MCF 10A (cell line): ENCODE measurements at regions of chr9 and their contacts with region 1.

Region 1: DNA sequence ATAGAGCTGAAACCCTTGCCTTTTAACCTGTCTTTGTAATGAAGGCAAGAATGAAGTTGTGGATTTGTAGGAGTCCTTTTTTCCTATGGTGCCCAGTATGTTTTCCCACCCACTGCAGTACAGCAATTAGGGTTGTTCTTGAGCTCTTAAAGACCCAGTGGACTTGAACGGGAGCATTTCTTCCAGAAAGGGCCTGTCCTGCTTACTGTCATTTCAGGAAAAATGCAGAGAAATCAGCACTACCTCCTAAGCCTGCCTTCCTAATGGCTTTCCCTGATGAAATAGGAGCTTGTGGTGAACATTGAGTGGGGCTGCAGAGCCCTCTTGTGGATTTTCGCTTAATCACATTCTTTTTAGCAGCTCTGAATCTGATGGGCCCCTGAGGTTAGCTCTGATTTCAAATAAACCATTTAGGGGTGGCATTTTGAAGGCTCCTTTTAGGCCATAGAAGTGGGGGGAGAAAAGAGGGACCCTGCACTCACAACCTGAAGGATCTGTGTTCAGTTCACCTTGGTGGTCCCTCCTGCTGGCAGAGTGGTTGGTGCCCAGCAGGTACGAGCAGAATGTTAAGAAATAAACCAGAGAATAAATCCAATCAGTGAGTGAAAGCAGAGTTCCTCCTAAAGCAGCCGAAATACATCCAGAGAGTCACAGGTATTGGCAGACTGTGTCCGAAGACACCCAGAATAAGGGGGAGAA is 188.0 kb upstream of the KLF9 start:
- DNase-seq: peak; percentile 83
- H3K4me3 Mint-ChIP-seq: no peak overlapping the region
- H3K27ac Mint-ChIP-seq: no peak overlapping the region
- H3K4me1 Mint-ChIP-seq: peaks cover 12% of the 10 kb centered on the region
- H3K27me3 Mint-ChIP-seq: no peaks in the 10 kb centered on the region
- CTCF ChIP-seq: peak; percentile 77

Region 2: DNA sequence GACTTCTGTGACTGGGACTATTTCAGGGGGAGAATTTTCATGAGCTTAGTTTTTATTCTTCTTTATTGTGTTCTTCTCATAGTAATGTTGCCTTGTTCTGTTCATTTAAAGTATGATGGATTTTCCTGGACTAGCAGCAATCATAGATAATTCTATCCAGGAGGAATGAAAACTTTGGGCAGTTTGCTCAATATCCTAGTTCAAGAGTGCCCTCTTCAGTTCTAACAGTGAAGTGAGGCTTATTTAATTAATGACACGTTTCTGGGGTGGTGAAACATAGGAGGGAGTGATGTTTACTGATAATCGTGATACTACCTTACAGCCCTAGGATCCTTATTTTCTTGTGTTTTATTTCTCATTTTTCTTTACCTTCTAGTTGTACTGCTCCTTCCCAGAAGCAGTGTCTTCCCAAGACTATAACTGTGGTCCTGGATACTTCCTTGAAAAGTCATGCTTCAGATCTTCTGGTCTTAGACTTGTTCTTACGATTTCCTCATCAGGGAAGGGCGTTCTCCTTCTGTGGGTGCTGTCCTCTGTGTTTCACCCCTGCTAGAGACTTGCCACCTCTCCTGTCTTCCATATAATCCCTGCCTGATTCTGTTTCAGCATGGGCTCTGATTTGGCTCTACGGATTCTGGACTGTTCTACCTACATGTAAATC is 724.5 kb before region 1 on chr9:
- CTCF ChIA-PET with region 1: no interaction called
- POLR2A ChIA-PET with region 1: no interaction called
- intact Hi-C with region 1: loop called (anchors 2 kb)
- DNase-seq: peak; percentile 63
- H3K4me3 Mint-ChIP-seq: no peak overlapping the region
- H3K27ac Mint-ChIP-seq: no peak overlapping the region
- H3K4me1 Mint-ChIP-seq: peaks cover 8% of the 10 kb centered on the region
- H3K27me3 Mint-ChIP-seq: no peaks in the 10 kb centered on the region
- CTCF ChIP-seq: peak; percentile 58

Region 3: DNA sequence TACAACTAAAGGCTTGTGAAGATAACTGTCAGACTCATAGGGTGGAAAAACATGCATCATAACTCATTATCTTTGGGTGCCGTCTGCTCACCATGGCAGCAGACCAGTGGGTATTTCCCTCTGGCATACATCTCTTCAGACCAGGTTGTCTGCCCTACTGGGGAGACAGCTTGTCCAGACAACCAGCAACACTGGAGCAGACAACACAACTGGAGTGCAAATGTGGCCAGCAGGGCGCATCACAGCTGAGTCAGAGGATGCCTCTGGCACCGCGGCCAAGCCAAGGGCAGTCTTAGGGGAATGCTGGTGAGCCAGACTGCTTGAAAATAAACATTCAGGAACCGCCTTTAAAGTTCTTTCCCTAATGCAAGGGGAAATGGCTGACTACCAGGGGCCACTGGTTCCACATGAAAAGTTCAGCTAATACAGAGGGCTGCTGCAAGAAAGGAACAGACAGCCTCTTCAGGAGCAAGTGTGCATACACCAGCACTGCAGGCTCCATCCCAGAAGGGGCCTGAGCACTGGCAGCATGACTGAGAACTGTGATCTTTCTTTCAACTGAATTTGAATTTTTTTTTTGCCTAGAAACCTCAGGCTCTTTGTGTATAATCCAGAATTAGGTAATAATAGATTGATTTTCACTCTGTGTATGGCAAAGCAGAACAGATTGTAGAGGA is 481.5 kb before region 1 on chr9:
- CTCF ChIA-PET with region 1: interaction called, 8 read pairs
- POLR2A ChIA-PET with region 1: no interaction called
- intact Hi-C with region 1: loop called (anchors 1 kb)
- DNase-seq: peak; percentile 85
- H3K4me3 Mint-ChIP-seq: no peak overlapping the region
- H3K27ac Mint-ChIP-seq: no peak overlapping the region
- H3K4me1 Mint-ChIP-seq: peaks cover 29% of the 10 kb centered on the region
- H3K27me3 Mint-ChIP-seq: no peaks in the 10 kb centered on the region
- CTCF ChIP-seq: peak; percentile 7

Region 4: GRCh38 chr9:70347046-70347445 is 255.4 kb before region 1 on chr9:
- CTCF ChIA-PET with region 1: interaction called, 129 read pairs
- POLR2A ChIA-PET with region 1: interaction called, 8 read pairs
- intact Hi-C with region 1: no loop called
- DNase-seq: no peak
- H3K4me3 Mint-ChIP-seq: no peak overlapping the region
- H3K27ac Mint-ChIP-seq: peak overlapping the region; percentile 17
- H3K4me1 Mint-ChIP-seq: no peaks in the 10 kb centered on the region
- H3K27me3 Mint-ChIP-seq: no peaks in the 10 kb centered on the region
- CTCF ChIP-seq: no peak

Region 5: DNA sequence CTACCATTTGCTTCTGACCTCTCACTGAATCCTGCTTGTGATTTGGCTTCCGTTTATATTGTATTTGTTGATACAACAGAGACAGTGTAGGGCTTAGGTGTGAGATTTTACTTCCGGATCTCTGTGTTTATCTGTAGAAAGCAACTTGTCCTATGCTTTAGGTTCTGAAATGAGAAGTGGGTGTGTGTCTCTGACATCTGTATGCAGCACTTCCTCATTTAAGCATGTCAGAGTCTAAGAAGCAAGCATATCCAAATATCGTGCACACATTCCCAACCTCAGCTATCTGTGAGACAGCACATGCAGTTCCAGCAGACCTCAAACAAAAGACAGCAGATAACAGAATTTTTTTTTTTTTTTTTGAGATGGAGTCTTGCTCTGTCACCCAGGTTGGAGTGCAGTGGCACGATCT is 204.3 kb before region 1 on chr9:
- CTCF ChIA-PET with region 1: interaction called, 12 read pairs
- POLR2A ChIA-PET with region 1: interaction called, 3 read pairs
- intact Hi-C with region 1: no loop called
- DNase-seq: no peak
- H3K4me3 Mint-ChIP-seq: no peak overlapping the region
- H3K27ac Mint-ChIP-seq: no peak overlapping the region
- H3K4me1 Mint-ChIP-seq: peaks cover 14% of the 10 kb centered on the region
- H3K27me3 Mint-ChIP-seq: no peaks in the 10 kb centered on the region
- CTCF ChIP-seq: no peak

Region 6: GRCh38 chr9:70484210-70485130 is 118.0 kb before region 1 on chr9:
- CTCF ChIA-PET with region 1: interaction called, 15 read pairs
- POLR2A ChIA-PET with region 1: interaction called, 12 read pairs
- intact Hi-C with region 1: loop called (anchors 1 kb)
- DNase-seq: peak; percentile 83
- H3K4me3 Mint-ChIP-seq: no peak overlapping the region
- H3K27ac Mint-ChIP-seq: peak overlapping the region; percentile 99
- H3K4me1 Mint-ChIP-seq: peaks cover 39% of the 10 kb centered on the region
- H3K27me3 Mint-ChIP-seq: no peaks in the 10 kb centered on the region
- CTCF ChIP-seq: peak; percentile 68